Activated CD4-positive, alpha-beta T cell treated with anti-CD3 and anti-CD28 coated beads for 36 hours (primary cell): ENCODE measurements at regions of chr5 and their contacts with region 1.

Region 1: DNA sequence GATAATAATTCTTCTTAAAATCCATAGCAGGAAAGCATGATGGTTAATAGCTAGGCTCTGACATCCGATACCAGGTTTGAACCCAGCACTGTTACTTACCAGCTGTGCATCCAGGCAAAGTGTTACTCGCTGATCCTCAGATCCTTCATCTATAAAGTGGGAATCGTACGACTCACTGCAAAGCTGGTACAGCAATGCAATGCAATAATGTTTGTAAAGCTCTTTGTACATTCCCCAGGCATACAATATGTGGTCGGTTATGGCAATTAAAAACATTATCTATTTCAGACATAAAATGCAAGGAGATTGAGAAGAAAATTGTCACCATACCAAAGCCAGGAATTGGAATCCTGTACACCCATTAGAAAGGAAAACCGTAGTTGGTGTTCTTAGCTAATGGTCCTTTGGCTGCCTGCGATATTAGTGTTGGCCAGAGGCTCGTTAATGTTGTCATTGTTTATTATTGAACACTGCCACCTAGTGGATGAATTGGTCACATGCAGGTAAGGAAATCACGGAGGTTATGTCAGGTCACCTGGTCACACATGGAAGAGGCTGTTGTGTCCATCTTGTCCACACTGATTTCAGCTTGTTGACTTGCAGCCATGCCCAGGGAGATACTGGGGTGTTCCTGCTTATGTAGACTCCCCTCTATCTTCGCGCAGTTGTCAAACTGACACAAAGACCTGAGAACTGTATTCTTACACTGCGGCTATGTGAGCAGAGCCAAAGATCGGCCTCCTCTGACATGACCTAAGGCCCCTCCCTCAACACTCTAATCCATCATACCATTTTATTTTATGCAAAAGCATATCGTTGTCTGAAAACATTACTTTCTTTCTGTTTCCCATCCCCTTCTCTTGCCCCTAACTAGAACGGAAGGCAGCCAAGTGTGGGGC is 87.5 kb upstream of the PPP2R2B start:
- DNase-seq: peak; percentile 58
- ATAC-seq: peak; percentile 81
- H3K4me3 Mint-ChIP-seq: no peak overlapping the region
- H3K27ac Mint-ChIP-seq: no peak overlapping the region
- H3K4me1 Mint-ChIP-seq: peaks cover 2% of the 10 kb centered on the region
- H3K27me3 Mint-ChIP-seq: no peaks in the 10 kb centered on the region

Region 2: GRCh38 chr5:146541958-146542849 is 423.8 kb before region 1 on chr5:
- CTCF ChIA-PET with region 1: interaction called, 75 read pairs
- POLR2A ChIA-PET with region 1: no interaction called
- intact Hi-C with region 1: loop called (anchors 1 kb)
- DNase-seq: peak; percentile 85
- ATAC-seq: peak; percentile 93
- H3K4me3 Mint-ChIP-seq: no peak overlapping the region
- H3K27ac Mint-ChIP-seq: no peak overlapping the region
- H3K4me1 Mint-ChIP-seq: no peaks in the 10 kb centered on the region
- H3K27me3 Mint-ChIP-seq: no peaks in the 10 kb centered on the region

Region 3: GRCh38 chr5:146662229-146662628 is 303.8 kb before region 1 on chr5:
- CTCF ChIA-PET with region 1: interaction called, 24 read pairs
- POLR2A ChIA-PET with region 1: no interaction called
- intact Hi-C with region 1: loop called (anchors 1 kb)
- DNase-seq: peak; percentile 28
- ATAC-seq: no peak
- H3K4me3 Mint-ChIP-seq: no peak overlapping the region
- H3K27ac Mint-ChIP-seq: no peak overlapping the region
- H3K4me1 Mint-ChIP-seq: peaks cover 10% of the 10 kb centered on the region
- H3K27me3 Mint-ChIP-seq: no peaks in the 10 kb centered on the region

Region 4: DNA sequence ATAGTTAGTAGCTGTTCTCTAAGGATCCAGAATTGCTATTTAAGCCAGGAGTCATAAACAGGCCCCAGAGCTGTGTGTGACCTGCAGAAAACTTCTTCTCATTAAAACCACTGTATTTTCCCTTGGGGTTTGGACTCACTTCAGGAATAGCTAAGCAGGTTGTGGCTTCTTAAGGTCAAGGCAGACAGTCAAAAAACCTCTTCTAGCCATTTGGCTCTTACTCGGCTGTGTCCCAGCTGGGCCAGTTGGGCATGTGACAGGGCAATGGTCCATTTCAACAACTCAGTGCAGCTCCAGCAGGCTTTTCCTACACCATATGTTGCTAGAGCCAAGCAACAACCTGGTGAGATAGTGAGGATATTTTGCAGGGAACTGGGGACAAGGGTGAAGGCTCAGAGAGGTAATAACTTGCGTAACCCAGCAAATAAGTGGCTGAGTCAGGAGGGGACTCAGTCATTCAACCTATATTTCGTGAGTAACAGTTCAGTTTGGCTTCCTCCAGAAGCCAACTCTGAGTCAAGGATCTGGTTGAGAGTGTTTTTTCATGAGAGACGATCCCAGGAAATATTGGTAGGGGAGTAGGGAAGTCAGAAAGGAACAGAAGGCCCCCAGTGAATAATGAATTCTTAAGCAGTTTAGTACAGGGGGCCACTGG is 28.0 kb after region 1 on chr5:
- CTCF ChIA-PET with region 1: no interaction called
- POLR2A ChIA-PET with region 1: interaction called, 11 read pairs
- intact Hi-C with region 1: no loop called
- DNase-seq: no peak
- ATAC-seq: no peak
- H3K4me3 Mint-ChIP-seq: no peak overlapping the region
- H3K27ac Mint-ChIP-seq: no peak overlapping the region
- H3K4me1 Mint-ChIP-seq: no peaks in the 10 kb centered on the region
- H3K27me3 Mint-ChIP-seq: peaks cover 7% of the 10 kb centered on the region